B cell (primary cell): ENCODE measurements at regions of chr11 and their contacts with region 1.

Region 1: GRCh38 chr11:74726547-74727182 is 4.6 kb downstream of the CHRDL2 start:
- DNase-seq: peak; percentile 71
- ATAC-seq: peak; percentile 94
- H3K4me3 ChIP-seq: no peak overlapping the region
- H3K4me3 Mint-ChIP-seq: no peak overlapping the region
- H3K27ac ChIP-seq: no peak overlapping the region
- H3K27ac Mint-ChIP-seq: no peak overlapping the region
- H3K4me1 ChIP-seq: peaks cover 4% of the 10 kb centered on the region in 2 donors
- H3K4me1 Mint-ChIP-seq: peaks cover 5% of the 10 kb centered on the region
- H3K27me3 ChIP-seq: peaks cover 0 to 30% (median 9%) of the 10 kb centered on the region in 4 experiments
- H3K27me3 Mint-ChIP-seq: peaks cover 37% of the 10 kb centered on the region
- CTCF ChIP-seq: peak; percentile 88

Region 2: GRCh38 chr11:74702383-74703007 is 24.2 kb before region 1 on chr11:
- CTCF ChIA-PET with region 1: interaction called, 12 read pairs
- POLR2A ChIA-PET with region 1: no interaction called
- intact Hi-C with region 1: no loop called
- DNase-seq: peak; percentile 65
- ATAC-seq: peak; percentile 72
- H3K4me3 ChIP-seq: no peak overlapping the region
- H3K4me3 Mint-ChIP-seq: no peak overlapping the region
- H3K27ac ChIP-seq: no peak overlapping the region
- H3K27ac Mint-ChIP-seq: no peak overlapping the region
- H3K4me1 ChIP-seq: no peaks in the 10 kb centered on the region
- H3K4me1 Mint-ChIP-seq: no peaks in the 10 kb centered on the region
- H3K27me3 ChIP-seq: no peaks in the 10 kb centered on the region
- H3K27me3 Mint-ChIP-seq: peaks cover 7% of the 10 kb centered on the region
- CTCF ChIP-seq: peak; percentile 91

Region 3: DNA sequence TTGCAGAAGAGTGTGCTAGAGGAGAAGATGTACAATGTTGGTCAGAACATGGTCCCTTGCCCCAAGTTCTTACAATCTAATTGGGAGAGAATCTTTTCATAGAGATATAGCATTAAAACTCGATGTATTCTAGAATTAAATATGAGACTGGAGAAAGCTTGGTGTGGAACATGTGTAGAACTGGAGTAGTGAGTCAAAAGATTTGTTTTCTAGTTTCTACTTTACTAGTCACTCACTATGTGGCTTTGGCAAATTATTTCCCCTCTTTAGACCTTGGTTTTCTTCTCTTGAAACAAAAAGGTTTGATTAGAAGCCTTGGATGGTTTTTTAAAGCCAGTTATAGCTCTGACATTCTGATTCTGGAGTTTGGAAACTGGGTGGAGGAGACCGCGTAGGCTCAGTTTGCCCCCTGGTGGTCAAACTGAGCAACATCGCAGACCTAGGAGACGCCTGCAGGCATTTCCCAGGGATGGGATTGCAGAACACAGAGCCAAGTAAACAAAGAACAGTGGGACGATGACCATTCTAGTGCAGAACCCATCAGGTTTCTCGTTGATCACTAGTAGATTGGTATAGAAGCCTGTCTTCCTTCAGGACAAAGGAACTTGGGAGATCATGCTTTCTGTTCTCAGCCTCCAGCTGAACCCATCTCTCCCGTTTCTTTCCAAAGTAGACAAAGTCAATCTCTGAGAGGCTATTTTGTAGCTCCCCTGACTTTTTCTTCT is 13.0 kb after region 1 on chr11:
- CTCF ChIA-PET with region 1: interaction called, 47 read pairs
- POLR2A ChIA-PET with region 1: no interaction called
- intact Hi-C with region 1: no loop called
- DNase-seq: peak; percentile 67
- ATAC-seq: peak; percentile 64
- H3K4me3 ChIP-seq: no peak overlapping the region
- H3K4me3 Mint-ChIP-seq: no peak overlapping the region
- H3K27ac ChIP-seq: no peak overlapping the region
- H3K27ac Mint-ChIP-seq: no peak overlapping the region
- H3K4me1 ChIP-seq: no peaks in the 10 kb centered on the region
- H3K4me1 Mint-ChIP-seq: peaks cover 2% of the 10 kb centered on the region
- H3K27me3 ChIP-seq: peaks cover 0 to 19% (median 6%) of the 10 kb centered on the region in 4 experiments
- H3K27me3 Mint-ChIP-seq: peaks cover 34% of the 10 kb centered on the region
- CTCF ChIP-seq: peak; percentile 93